SK-N-SH (cell line): ENCODE measurements at regions of chr3 and their contacts with region 1.

Region 1: GRCh38 chr3:62065982-62066693 is 307.2 kb downstream of the FEZF2 start:
- DNase-seq: no peak
- H3K4me3 ChIP-seq: no peak overlapping the region
- H3K27ac ChIP-seq: no peak overlapping the region; a peak in 2 of 4 replicates
- H3K4me1 ChIP-seq: no peaks in the 10 kb centered on the region; a peak in 2 of 4 replicates
- H3K27me3 ChIP-seq: no peaks in the 10 kb centered on the region
- CTCF ChIP-seq: no peak
- EP300 ChIP-seq: peak in 1 of 2 experiments; percentile 59; a peak in 2 of 4 replicates
- RAD21 ChIP-seq: no peak

Region 2: DNA sequence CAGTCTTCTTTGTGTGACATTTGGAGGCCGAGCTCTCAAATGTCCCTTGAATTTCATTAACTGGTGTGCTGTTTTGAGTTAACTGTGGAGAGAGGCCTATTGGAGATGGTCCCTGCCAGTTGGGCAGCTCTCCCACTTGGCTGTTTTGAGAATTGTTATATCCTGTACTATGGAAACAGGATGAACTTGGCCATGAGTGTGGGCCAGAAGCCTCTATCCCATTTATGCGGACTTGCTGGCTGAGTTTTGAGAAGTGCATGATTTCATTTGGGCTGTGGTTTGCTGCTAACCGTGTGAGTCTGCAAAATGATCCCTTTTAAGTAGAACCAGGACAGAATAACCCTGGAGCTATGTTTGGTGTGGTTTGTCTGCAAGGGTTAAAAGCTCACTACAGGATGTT is 138.8 kb before region 1 on chr3:
- CTCF ChIA-PET with region 1: no interaction called
- POLR2A ChIA-PET with region 1: no interaction called
- DNase-seq: peak; percentile 65
- H3K4me3 ChIP-seq: no peak overlapping the region
- H3K27ac ChIP-seq: peak overlapping the region; percentile 85 to 87
- H3K4me1 ChIP-seq: peaks cover 7 to 30% of the 10 kb centered on the region in 2 experiments; a peak in 2 of 4 replicates
- H3K27me3 ChIP-seq: no peaks in the 10 kb centered on the region
- CTCF ChIP-seq: no peak
- EP300 ChIP-seq: peak in 1 of 2 experiments; percentile 55; a peak in 2 of 4 replicates
- RAD21 ChIP-seq: peak; percentile 12; the same call in 1 of the 2 replicates

Region 3: GRCh38 chr3:62007036-62007818 is 58.9 kb before region 1 on chr3:
- CTCF ChIA-PET with region 1: no interaction called
- POLR2A ChIA-PET with region 1: no interaction called
- DNase-seq: no peak
- H3K4me3 ChIP-seq: no peak overlapping the region
- H3K27ac ChIP-seq: no peak overlapping the region
- H3K4me1 ChIP-seq: no peaks in the 10 kb centered on the region
- H3K27me3 ChIP-seq: no peaks in the 10 kb centered on the region
- CTCF ChIP-seq: no peak
- EP300 ChIP-seq: no peak
- RAD21 ChIP-seq: no peak

Region 4: GRCh38 chr3:62051507-62051906 is 14.6 kb before region 1 on chr3:
- CTCF ChIA-PET with region 1: interaction called, 11 read pairs
- POLR2A ChIA-PET with region 1: no interaction called
- DNase-seq: peak; percentile 13
- H3K4me3 ChIP-seq: no peak overlapping the region
- H3K27ac ChIP-seq: no peak overlapping the region
- H3K4me1 ChIP-seq: no peaks in the 10 kb centered on the region
- H3K27me3 ChIP-seq: no peaks in the 10 kb centered on the region
- CTCF ChIP-seq: peak; percentile 61
- EP300 ChIP-seq: no peak
- RAD21 ChIP-seq: peak; percentile 60